PC-3 (cell line): ENCODE measurements at regions of chr5 and their contacts with region 1.

Region 1: GRCh38 chr5:317086-317811 is 4.3 kb upstream of the AHRR start:
- DNase-seq: peak; percentile 73
- ATAC-seq: peak; percentile 57
- H3K4me3 ChIP-seq: no peak overlapping the region
- H3K27ac ChIP-seq: no peak overlapping the region
- H3K4me1 ChIP-seq: peaks cover 4% of the 10 kb centered on the region; the same call in 1 of the 2 replicates
- H3K27me3 ChIP-seq: no peaks in the 10 kb centered on the region
- CTCF ChIP-seq: peak; percentile 83

Region 2: DNA sequence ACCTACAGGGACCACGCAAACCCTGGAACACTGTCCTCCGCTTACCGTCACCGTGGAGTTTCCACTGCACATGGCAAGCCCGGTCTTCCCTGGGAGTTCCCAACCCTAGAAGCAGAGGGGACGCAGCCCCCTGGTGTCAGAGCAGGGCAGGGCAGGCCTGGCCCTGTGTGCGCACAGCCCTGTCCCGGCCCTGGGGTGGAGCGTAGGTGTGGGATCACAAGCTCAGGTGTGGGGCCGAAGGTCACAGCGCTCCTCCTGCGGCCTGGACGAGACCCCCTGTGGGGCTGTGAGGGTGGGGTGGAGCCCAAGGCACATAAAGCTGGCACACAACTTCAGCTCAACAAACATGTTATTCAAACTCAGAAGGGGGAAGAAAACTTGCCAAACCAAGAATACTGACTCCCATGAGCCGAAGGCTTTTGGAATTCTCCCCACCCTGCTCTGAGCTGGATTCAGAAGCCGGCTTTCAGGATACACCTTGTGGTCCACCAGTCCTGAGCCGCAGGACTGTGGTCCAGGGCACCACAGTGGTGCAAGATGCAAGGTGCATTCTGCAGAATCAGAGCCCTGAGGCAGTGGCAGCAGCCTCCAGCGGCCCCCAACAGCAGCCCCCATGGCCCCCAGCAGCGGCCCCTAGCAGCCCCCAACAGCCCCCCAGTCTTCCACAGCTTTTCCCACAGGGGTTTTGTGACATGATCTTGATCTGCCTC is 113.9 kb after region 1 on chr5:
- CTCF ChIA-PET with region 1: interaction called, 19 read pairs
- POLR2A ChIA-PET with region 1: no interaction called
- intact Hi-C with region 1: loop called (anchors 5 kb)
- DNase-seq: peak; percentile 62
- ATAC-seq: peak; percentile 98
- H3K4me3 ChIP-seq: no peak overlapping the region
- H3K27ac ChIP-seq: no peak overlapping the region
- H3K4me1 ChIP-seq: no peaks in the 10 kb centered on the region
- H3K27me3 ChIP-seq: no peaks in the 10 kb centered on the region
- CTCF ChIP-seq: peak; percentile 83

Region 3: GRCh38 chr5:819078-819477 is 501.8 kb after region 1 on chr5:
- CTCF ChIA-PET with region 1: no interaction called
- POLR2A ChIA-PET with region 1: no interaction called
- intact Hi-C with region 1: no loop called
- DNase-seq: no peak
- ATAC-seq: no peak; the same call in 1 of the 2 replicates
- H3K4me3 ChIP-seq: no peak overlapping the region
- H3K27ac ChIP-seq: no peak overlapping the region
- H3K4me1 ChIP-seq: no peaks in the 10 kb centered on the region
- H3K27me3 ChIP-seq: no peaks in the 10 kb centered on the region
- CTCF ChIP-seq: no peak